ENCODE measurements at regions of chr2 and their contacts with region 1.

Region 1: DNA sequence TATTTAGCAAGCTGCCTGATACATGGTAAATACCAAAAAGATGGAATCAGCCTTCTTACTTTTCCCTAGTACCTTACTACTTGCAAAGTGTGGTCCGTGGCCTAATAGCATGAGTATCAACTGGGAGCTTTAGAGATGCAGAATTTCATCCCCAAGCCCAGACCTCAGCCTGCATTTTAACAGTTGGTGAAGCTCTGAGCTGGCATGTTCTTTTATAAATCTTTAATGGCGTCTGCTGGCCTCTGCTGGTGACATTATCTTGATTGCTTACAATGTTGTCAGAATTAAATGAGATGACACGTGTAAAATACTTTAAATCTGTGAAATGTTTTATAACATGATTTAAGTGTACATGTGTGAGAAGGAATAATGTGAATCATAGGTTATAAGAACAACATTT is 115.1 kb upstream of the NOSTRIN start:
- DNase-seq: peak in 7 of 9 donors; percentile 12 to 50 (median 31)
- ATAC-seq: no peak
- H3K4me3 ChIP-seq: no peak overlapping the region
- H3K4me3 Mint-ChIP-seq: no peak overlapping the region
- H3K27ac ChIP-seq: no peak overlapping the region
- H3K27ac Mint-ChIP-seq: no peak overlapping the region
- H3K4me1 ChIP-seq: no peaks in the 10 kb centered on the region
- H3K4me1 Mint-ChIP-seq: peaks cover 3 to 28% (median 9%) of the 10 kb centered on the region in 7 donors
- H3K27me3 ChIP-seq: no peaks in the 10 kb centered on the region
- H3K27me3 Mint-ChIP-seq: no peaks in the 10 kb centered on the region

Region 2: GRCh38 chr2:168439536-168439935 is 247.8 kb before region 1 on chr2:
- CTCF ChIA-PET with region 1: interaction called, 10 read pairs
- POLR2A ChIA-PET with region 1: interaction called, 3 read pairs
- intact Hi-C with region 1: loop called in 1 of 2 experiments (anchors 5 kb)
- DNase-seq: peak in 1 of 9 donors; percentile 29
- ATAC-seq: no peak
- H3K4me3 ChIP-seq: no peak overlapping the region
- H3K4me3 Mint-ChIP-seq: peak overlapping the region in 7 of 10 donors; percentile 0 to 75 (median 41)
- H3K27ac ChIP-seq: no peak overlapping the region
- H3K27ac Mint-ChIP-seq: peak overlapping the region in 2 of 9 donors; percentile 8 to 27
- H3K4me1 ChIP-seq: peaks cover 0 to 44% of the 10 kb centered on the region in 2 donors
- H3K4me1 Mint-ChIP-seq: peaks cover 12 to 85% (median 67%) of the 10 kb centered on the region in 7 donors
- H3K27me3 ChIP-seq: no peaks in the 10 kb centered on the region
- H3K27me3 Mint-ChIP-seq: peaks cover 0 to 2% (median 0%) of the 10 kb centered on the region in 5 donors

Region 3: GRCh38 chr2:168920504-168921157 is 233.3 kb after region 1 on chr2:
- CTCF ChIA-PET with region 1: no interaction called
- POLR2A ChIA-PET with region 1: no interaction called
- intact Hi-C with region 1: loop called in 1 of 2 experiments (anchors 5 kb)
- DNase-seq: peak in 6 of 9 donors; percentile 15 to 51 (median 42)
- ATAC-seq: no peak
- H3K4me3 ChIP-seq: no peak overlapping the region
- H3K4me3 Mint-ChIP-seq: no peak overlapping the region
- H3K27ac ChIP-seq: no peak overlapping the region
- H3K27ac Mint-ChIP-seq: peak overlapping the region in 1 of 9 donors; percentile 8
- H3K4me1 ChIP-seq: no peaks in the 10 kb centered on the region
- H3K4me1 Mint-ChIP-seq: peaks cover 0 to 8% (median 0%) of the 10 kb centered on the region in 7 donors
- H3K27me3 ChIP-seq: no peaks in the 10 kb centered on the region
- H3K27me3 Mint-ChIP-seq: peaks cover 18 to 58% (median 25%) of the 10 kb centered on the region in 5 donors

Region 4: GRCh38 chr2:170409164-170409535 is 1721.8 kb after region 1 on chr2:
- CTCF ChIA-PET with region 1: no interaction called
- POLR2A ChIA-PET with region 1: no interaction called
- intact Hi-C with region 1: no loop called
- DNase-seq: peak; percentile 46 to 80 (median 69)
- ATAC-seq: peak; percentile 86
- H3K4me3 ChIP-seq: no peak overlapping the region
- H3K4me3 Mint-ChIP-seq: peak overlapping the region in 8 of 10 donors; percentile 61 to 80 (median 64)
- H3K27ac ChIP-seq: no peak overlapping the region
- H3K27ac Mint-ChIP-seq: peak overlapping the region in 2 of 9 donors; percentile 43 to 44
- H3K4me1 ChIP-seq: peaks cover 0 to 6% of the 10 kb centered on the region in 2 donors
- H3K4me1 Mint-ChIP-seq: peaks cover 5 to 15% (median 11%) of the 10 kb centered on the region in 7 donors
- H3K27me3 ChIP-seq: no peaks in the 10 kb centered on the region
- H3K27me3 Mint-ChIP-seq: peaks cover 24 to 32% (median 32%) of the 10 kb centered on the region in 5 donors